Endothelial cell of umbilical vein (primary cell): ENCODE measurements at regions of chr1 and their contacts with region 1.

Region 1: DNA sequence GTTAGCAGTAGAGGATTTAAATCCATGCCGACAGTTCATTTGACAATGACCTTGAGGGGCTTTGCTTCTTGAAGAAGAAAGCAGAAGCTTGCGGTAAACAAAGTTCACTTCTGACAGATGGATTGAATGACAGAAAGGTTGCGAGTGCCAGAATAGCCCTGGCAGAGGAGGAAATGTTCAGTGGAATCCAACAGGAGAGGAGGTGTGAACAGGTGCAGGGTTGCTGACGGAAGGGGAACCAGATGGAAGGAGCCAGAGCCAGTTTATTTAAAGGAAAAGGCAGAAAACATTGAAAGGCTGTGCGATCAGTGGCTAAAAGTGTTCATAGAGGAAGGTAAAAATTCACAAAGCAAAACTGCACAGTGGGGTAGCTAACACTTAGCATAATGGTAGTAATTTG is 141.0 kb downstream of the SDCCAG8 start:
- DNase-seq: no peak
- H3K4me3 ChIP-seq: no peak overlapping the region
- H3K27ac ChIP-seq: no peak overlapping the region
- H3K4me1 ChIP-seq: no peaks in the 10 kb centered on the region
- H3K27me3 ChIP-seq: no peaks in the 10 kb centered on the region
- CTCF ChIP-seq: no peak
- POLR2A ChIP-seq: no peak

Region 2: GRCh38 chr1:242764161-242764560 is 632.7 kb before region 1 on chr1:
- CTCF ChIA-PET with region 1: no interaction called
- POLR2A ChIA-PET with region 1: no interaction called
- dilution Hi-C with region 1: no loop called
- intact Hi-C with region 1: no loop called
- DNase-seq: no peak
- H3K4me3 ChIP-seq: no peak overlapping the region
- H3K27ac ChIP-seq: no peak overlapping the region
- H3K4me1 ChIP-seq: no peaks in the 10 kb centered on the region
- H3K27me3 ChIP-seq: no peaks in the 10 kb centered on the region
- CTCF ChIP-seq: no peak
- POLR2A ChIP-seq: no peak

Region 3: DNA sequence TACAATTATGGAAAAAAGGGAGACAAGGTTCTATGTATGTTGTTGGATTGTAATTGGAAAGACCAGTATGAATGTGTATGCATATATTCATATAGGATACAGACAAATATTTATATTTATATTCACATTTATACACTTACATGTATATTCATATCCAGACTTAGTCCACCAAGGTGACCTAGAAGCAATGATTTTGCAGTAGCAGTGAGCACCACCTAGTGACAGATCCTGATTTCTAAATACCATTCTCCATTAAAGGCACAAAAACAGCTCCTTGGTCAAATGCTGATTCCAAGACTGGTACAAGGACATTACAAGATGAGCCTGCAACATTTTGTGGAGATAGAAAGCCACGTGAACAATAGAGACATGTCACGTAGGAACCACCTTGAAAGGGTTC is 12.4 kb after region 1 on chr1:
- CTCF ChIA-PET with region 1: interaction called, 13 read pairs
- POLR2A ChIA-PET with region 1: no interaction called
- dilution Hi-C with region 1: no loop called
- intact Hi-C with region 1: no loop called
- DNase-seq: peak; percentile 56
- H3K4me3 ChIP-seq: no peak overlapping the region
- H3K27ac ChIP-seq: no peak overlapping the region
- H3K4me1 ChIP-seq: peaks cover 19% of the 10 kb centered on the region
- H3K27me3 ChIP-seq: no peaks in the 10 kb centered on the region
- CTCF ChIP-seq: peak; percentile 23 to 39
- POLR2A ChIP-seq: no peak

Region 4: GRCh38 chr1:243580072-243580471 is 183.2 kb after region 1 on chr1:
- CTCF ChIA-PET with region 1: no interaction called
- POLR2A ChIA-PET with region 1: no interaction called
- dilution Hi-C with region 1: no loop called
- intact Hi-C with region 1: no loop called
- DNase-seq: no peak
- H3K4me3 ChIP-seq: no peak overlapping the region
- H3K27ac ChIP-seq: no peak overlapping the region
- H3K4me1 ChIP-seq: no peaks in the 10 kb centered on the region
- H3K27me3 ChIP-seq: no peaks in the 10 kb centered on the region
- CTCF ChIP-seq: no peak
- POLR2A ChIP-seq: no peak